ENCODE measurements at regions of chr5 and their contacts with region 1.

Region 1: GRCh38 chr5:78472469-78473106 is 112.2 kb downstream of the SCAMP1 start:
- DNase-seq: peak; percentile 54
- H3K4me3 ChIP-seq: no peak overlapping the region
- H3K27ac ChIP-seq: no peak overlapping the region
- H3K4me1 ChIP-seq: no peaks in the 10 kb centered on the region
- H3K27me3 ChIP-seq: no peaks in the 10 kb centered on the region
- CTCF ChIP-seq: peak; percentile 45; the same call in 1 of the 2 replicates

Region 2: GRCh38 chr5:78638423-78638822 is 165.8 kb after region 1 on chr5:
- CTCF ChIA-PET with region 1: no interaction called
- POLR2A ChIA-PET with region 1: no interaction called
- intact Hi-C with region 1: loop called (anchors 10 kb)
- DNase-seq: no peak
- H3K4me3 ChIP-seq: no peak overlapping the region
- H3K27ac ChIP-seq: no peak overlapping the region
- H3K4me1 ChIP-seq: no peaks in the 10 kb centered on the region
- H3K27me3 ChIP-seq: no peaks in the 10 kb centered on the region
- CTCF ChIP-seq: no peak